GM12878 (cell line): ENCODE measurements at regions of chr3 and their contacts with region 1.

Region 1: DNA sequence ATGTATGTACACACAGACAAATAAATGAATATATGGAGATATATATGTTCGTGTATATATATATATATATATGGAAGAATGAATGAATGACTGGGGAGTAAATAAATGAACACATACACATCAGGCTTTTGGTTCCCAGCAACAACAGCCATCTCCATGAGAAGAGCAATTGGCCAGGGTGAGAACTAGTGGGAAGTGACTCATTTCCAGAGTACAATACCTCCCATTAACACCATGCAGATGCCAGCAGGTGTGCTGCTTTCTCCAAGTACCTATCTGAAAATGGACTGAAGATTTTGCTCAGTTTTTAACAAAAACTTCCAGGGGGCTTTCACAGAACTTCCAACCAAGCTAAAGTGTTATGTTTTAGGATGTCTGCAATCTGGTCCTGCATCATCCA is 179.8 kb upstream of the SLC2A2 start:
- DNase-seq: peak; percentile 62
- ATAC-seq: peak; percentile 83
- H3K4me3 ChIP-seq: no peak overlapping the region
- H3K27ac ChIP-seq: peak overlapping the region; percentile 10; the same call in 1 of the 2 replicates
- H3K4me1 ChIP-seq: peaks cover 4% of the 10 kb centered on the region; the same call in 1 of the 2 replicates
- H3K27me3 ChIP-seq: no peaks in the 10 kb centered on the region
- CTCF ChIP-seq: no peak
- EP300 ChIP-seq: no peak
- POLR2A ChIP-seq: no peak
- RAD21 ChIP-seq: no peak

Region 2: DNA sequence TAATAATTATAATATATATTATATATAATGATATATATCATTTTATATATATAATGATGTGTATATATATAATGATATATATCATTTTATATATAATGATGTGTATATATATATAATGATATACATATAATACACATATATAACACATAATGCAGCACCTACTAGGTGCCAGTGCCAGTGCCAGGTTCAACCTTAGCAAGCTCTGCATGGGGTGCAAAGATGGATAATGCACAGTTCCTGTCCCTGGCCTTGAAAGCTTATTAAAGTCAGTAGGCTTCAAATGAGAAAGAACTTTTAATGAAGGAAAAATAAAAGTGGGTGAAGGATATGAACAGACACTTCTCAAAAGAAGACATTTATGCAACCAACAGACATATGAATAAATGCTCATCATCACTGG is 13.0 kb after region 1 on chr3:
- CTCF ChIA-PET with region 1: interaction called, 11 read pairs
- POLR2A ChIA-PET with region 1: interaction called, 3 read pairs
- RAD21 ChIA-PET with region 1: no interaction called
- SMC1A ChIA-PET with region 1: interaction called, 15 read pairs
- in situ Hi-C with region 1: no loop called
- intact Hi-C with region 1: no loop called
- DNase-seq: no peak
- ATAC-seq: no peak
- H3K4me3 ChIP-seq: no peak overlapping the region
- H3K27ac ChIP-seq: no peak overlapping the region
- H3K4me1 ChIP-seq: peaks cover 7% of the 10 kb centered on the region
- H3K27me3 ChIP-seq: no peaks in the 10 kb centered on the region
- CTCF ChIP-seq: no peak
- EP300 ChIP-seq: no peak
- POLR2A ChIP-seq: no peak
- RAD21 ChIP-seq: no peak

Region 3: DNA sequence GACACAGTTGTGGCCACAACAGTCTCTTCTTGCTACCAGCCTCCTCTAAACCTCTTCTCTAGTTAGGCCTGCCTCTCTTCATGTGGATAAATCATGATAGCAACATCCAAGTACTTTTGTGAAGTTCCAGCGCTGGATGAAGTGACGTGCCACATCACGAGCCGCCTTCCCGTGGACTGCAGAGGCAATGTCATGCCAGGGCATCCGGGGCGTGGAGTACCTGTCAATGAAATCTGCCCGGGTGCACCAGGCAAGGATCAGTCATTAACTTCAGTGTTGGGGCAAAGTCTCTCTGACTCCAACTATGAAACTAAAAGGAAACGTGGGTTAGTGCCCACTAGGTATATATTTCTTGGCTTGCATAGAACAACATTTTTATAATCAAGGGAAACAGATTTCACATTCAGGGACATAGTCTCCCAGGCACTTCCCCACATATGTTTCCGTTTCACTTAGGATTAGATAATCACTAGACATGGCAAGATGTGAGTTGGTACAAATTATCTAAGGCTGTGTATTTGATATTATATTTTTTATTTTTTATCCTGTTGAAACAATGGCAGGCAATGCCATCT is 470.4 kb after region 1 on chr3:
- CTCF ChIA-PET with region 1: no interaction called
- POLR2A ChIA-PET with region 1: no interaction called
- RAD21 ChIA-PET with region 1: no interaction called
- SMC1A ChIA-PET with region 1: no interaction called
- in situ Hi-C with region 1: no loop called
- intact Hi-C with region 1: no loop called
- DNase-seq: no peak
- ATAC-seq: no peak
- H3K4me3 ChIP-seq: no peak overlapping the region
- H3K27ac ChIP-seq: no peak overlapping the region
- H3K4me1 ChIP-seq: no peaks in the 10 kb centered on the region
- H3K27me3 ChIP-seq: no peaks in the 10 kb centered on the region; a peak in 1 of 4 replicates
- CTCF ChIP-seq: no peak
- EP300 ChIP-seq: no peak
- POLR2A ChIP-seq: no peak
- RAD21 ChIP-seq: no peak